Endothelial cell of umbilical vein (primary cell): ENCODE measurements at regions of chr4 and their contacts with region 1.

Region 1: DNA sequence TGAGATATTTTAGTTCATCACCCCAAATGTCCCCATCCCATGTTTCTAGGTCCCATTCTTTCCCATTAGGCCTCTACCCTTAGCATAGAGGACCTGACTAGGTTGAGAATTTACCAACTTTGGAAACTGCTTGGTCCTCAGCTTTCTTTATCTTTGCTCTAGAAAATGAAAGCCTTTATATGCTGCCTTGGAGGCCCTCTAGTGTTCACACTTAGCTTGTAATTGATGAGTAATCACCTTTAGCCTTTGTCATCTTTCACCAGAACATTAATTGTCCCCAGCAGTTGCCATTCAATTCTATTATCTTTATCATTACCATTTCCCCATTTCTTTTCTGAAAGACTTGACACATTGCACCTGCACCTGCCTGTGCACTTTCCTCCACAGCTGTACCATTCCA is 589.2 kb upstream of the NR3C2 start:
- DNase-seq: peak; percentile 50
- H3K4me3 ChIP-seq: no peak overlapping the region
- H3K27ac ChIP-seq: no peak overlapping the region
- H3K4me1 ChIP-seq: no peaks in the 10 kb centered on the region
- H3K27me3 ChIP-seq: no peaks in the 10 kb centered on the region
- CTCF ChIP-seq: peak; percentile 28 to 53
- POLR2A ChIP-seq: no peak

Region 2: DNA sequence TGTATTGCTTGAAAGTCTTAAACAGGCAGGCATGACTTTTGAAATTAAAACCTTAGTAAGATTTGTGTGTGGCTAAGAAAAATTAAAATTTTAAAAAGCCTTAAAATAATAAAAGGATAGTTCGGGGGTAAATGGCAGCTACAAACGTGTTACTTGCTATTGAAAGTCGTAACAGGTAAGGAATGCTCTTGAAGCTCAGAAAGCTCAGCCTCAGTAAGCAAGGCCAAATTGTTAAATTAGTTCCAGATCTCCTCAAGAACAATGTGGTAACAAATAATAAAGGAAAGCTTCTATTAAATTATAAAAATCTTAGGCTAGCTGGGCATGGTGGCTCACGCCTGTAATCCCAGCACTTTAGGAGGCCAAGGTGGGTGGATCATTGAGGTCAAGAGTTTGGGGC is 1372.9 kb before region 1 on chr4:
- CTCF ChIA-PET with region 1: no interaction called
- POLR2A ChIA-PET with region 1: no interaction called
- dilution Hi-C with region 1: no loop called
- intact Hi-C with region 1: loop called (anchors 5 kb)
- DNase-seq: no peak
- H3K4me3 ChIP-seq: no peak overlapping the region
- H3K27ac ChIP-seq: no peak overlapping the region
- H3K4me1 ChIP-seq: no peaks in the 10 kb centered on the region
- H3K27me3 ChIP-seq: no peaks in the 10 kb centered on the region
- CTCF ChIP-seq: no peak
- POLR2A ChIP-seq: no peak

Region 3: GRCh38 chr4:147924604-147925412 is 1106.6 kb before region 1 on chr4:
- CTCF ChIA-PET with region 1: interaction called, 11 read pairs
- POLR2A ChIA-PET with region 1: no interaction called
- dilution Hi-C with region 1: no loop called
- intact Hi-C with region 1: loop called (anchors 5 kb)
- DNase-seq: peak; percentile 65
- H3K4me3 ChIP-seq: no peak overlapping the region
- H3K27ac ChIP-seq: no peak overlapping the region
- H3K4me1 ChIP-seq: peaks cover 19% of the 10 kb centered on the region
- H3K27me3 ChIP-seq: no peaks in the 10 kb centered on the region
- CTCF ChIP-seq: peak; percentile 28 to 64
- POLR2A ChIP-seq: no peak

Region 4: DNA sequence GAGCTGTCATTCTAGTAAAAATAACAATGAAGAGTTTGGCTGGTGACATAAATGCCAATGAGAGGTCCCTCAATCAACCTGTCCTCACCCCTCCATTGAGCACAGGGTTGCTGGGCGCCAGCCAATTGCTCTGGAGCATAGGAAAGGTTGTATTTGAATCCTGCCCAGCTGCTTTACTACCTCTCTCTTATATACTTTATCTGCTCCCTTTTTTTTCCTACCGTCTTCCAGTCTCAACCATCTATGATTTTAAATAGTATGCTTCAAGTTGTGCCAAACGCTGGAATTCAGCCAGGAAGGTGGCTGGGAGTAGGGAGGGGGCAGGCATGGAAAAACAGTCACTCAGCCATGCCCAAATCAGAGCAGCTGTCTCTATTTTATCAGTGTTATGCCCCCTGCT is 743.0 kb before region 1 on chr4:
- CTCF ChIA-PET with region 1: interaction called, 13 read pairs
- POLR2A ChIA-PET with region 1: no interaction called
- dilution Hi-C with region 1: no loop called
- intact Hi-C with region 1: loop called (anchors 1 kb)
- DNase-seq: peak; percentile 27
- H3K4me3 ChIP-seq: no peak overlapping the region
- H3K27ac ChIP-seq: no peak overlapping the region
- H3K4me1 ChIP-seq: no peaks in the 10 kb centered on the region
- H3K27me3 ChIP-seq: no peaks in the 10 kb centered on the region
- CTCF ChIP-seq: no peak
- POLR2A ChIP-seq: no peak

Region 5: GRCh38 chr4:148435654-148436406 is 595.6 kb before region 1 on chr4:
- CTCF ChIA-PET with region 1: interaction called, 12 read pairs
- POLR2A ChIA-PET with region 1: no interaction called
- dilution Hi-C with region 1: no loop called
- intact Hi-C with region 1: no loop called
- DNase-seq: no peak
- H3K4me3 ChIP-seq: no peak overlapping the region
- H3K27ac ChIP-seq: no peak overlapping the region
- H3K4me1 ChIP-seq: peaks cover 21% of the 10 kb centered on the region
- H3K27me3 ChIP-seq: no peaks in the 10 kb centered on the region
- CTCF ChIP-seq: no peak
- POLR2A ChIP-seq: no peak

Region 6: GRCh38 chr4:149897783-149898182 is 866.4 kb after region 1 on chr4:
- CTCF ChIA-PET with region 1: no interaction called
- POLR2A ChIA-PET with region 1: no interaction called
- dilution Hi-C with region 1: no loop called
- intact Hi-C with region 1: loop called (anchors 2 kb)
- DNase-seq: peak; percentile 35
- H3K4me3 ChIP-seq: no peak overlapping the region
- H3K27ac ChIP-seq: no peak overlapping the region
- H3K4me1 ChIP-seq: no peaks in the 10 kb centered on the region
- H3K27me3 ChIP-seq: no peaks in the 10 kb centered on the region
- CTCF ChIP-seq: peak in 1 of 2 donors; percentile 7
- POLR2A ChIP-seq: no peak